Activated CD4-positive, alpha-beta T cell treated with anti-CD3 and anti-CD28 coated beads, Interleukin-2, amount 10 ng/mL, durations not matched to agents 24 days and 14 days (primary cell): ENCODE measurements at regions of chr1 and their contacts with region 1.

Region 1: DNA sequence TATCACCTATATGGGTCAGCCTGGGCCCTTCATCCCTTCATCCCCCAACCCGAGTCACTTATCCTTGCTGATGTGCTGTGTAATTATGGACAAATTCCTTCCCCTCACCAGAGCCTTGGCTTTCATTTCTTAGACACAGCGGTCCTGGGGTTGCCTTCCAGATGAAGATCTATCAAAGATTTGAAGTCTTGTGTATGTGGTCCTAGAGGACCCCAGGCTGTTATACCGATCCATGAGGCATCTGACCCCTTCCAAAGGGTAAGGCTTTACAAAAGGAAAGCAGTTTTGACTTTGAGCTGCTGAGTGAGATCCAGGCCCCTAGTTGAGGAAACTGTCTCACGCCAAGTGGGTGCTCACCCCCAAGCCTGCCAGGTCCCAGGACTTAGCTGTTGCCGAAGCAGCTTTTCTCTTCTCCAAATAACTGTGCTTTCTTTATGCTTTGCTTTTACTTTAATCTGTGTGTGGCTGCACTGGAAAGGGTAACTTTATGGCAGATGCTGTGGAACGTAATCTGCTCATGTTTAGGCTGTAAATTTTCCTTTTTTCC is 37.6 kb downstream of the MAN1C1 start:
- DNase-seq: no peak
- H3K4me3 Mint-ChIP-seq: no peak overlapping the region
- H3K27ac Mint-ChIP-seq: no peak overlapping the region
- H3K4me1 Mint-ChIP-seq: peaks cover 4% of the 10 kb centered on the region
- H3K27me3 Mint-ChIP-seq: peaks cover 60% of the 10 kb centered on the region

Region 2: DNA sequence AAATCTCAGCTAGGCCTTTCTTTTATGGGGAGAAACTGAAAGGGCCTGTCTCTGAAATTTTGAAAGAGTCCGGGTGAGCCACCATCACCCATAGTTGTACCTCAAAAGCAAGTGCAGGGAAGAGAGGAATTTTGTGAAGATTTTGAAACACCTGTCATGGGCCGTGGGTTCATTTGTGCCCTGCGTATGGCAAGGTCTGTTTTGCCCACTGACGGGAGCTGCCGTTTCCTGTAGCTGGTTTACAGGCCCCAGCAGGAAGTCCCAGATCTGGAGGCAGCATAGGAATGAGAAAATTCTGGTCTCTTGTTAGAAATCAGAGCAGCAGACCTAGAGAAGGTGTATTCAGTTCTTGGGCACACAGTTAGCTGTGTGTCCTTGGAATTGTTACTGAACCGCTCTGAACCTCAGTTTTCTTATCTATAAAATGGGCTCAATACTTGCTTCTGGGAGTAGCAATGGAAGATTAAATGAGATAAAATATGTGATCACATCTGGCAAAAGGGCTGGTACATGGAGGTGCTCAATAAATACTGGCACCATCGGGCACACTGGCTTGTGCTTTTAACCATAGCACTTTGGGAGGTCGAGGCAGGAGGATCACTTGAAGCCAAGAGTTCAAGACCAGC is 14.9 kb after region 1 on chr1:
- intact Hi-C with region 1: loop called (anchors 2 kb)
- DNase-seq: no peak
- H3K4me3 Mint-ChIP-seq: no peak overlapping the region
- H3K27ac Mint-ChIP-seq: no peak overlapping the region
- H3K4me1 Mint-ChIP-seq: peaks cover 23% of the 10 kb centered on the region
- H3K27me3 Mint-ChIP-seq: peaks cover 78% of the 10 kb centered on the region